Calu3 (cell line): ENCODE measurements at regions of chr14 and their contacts with region 1.

Region 1: DNA sequence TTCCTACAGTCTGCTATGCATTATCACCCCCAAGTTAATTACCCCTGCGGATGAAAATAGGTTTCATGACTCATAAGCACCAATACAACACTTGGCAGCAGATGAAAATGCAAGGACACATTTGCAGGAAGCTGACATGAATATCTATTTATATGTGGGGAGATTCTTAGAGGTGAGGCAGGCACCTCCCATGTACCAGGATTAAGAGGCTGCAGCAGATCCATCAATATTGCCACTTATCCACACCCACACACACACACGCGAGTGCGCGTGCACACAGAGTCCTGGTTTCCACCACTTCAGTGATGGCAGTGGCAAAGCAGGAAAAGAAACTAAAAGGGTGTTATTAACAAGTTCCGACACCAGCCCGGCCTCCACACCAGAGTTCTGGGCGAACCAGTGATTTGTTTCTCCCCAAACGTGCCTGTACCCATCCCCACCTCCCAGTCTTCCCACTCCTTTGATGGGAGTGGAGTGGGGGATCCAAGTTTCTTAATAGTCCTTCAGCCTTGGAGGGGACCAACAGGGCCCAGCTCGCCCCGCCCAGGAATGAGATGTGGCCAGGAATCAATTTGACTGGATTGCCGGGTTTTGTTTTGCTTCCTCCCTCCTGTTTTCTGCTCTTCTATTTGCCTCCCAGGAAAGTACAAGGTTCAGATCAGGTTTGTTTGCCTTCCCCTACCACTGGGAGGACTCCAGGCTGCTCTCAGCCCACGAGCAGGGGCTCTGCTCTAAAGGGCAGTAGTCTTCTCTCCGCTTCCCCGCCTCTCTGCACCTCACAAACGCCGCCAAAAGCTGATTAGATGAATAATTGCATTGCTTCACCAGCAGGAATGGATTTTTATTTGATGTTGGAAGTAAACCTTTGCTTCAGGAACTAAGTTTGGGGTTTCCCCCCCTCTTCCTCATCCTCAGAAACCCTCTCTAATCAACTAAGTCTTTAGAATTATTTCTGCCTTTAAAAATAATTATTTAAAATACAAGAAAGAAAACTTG is 5.2 kb downstream of the IRF2BPL start:
- DNase-seq: peak; percentile 68
- H3K4me3 Mint-ChIP-seq: peak overlapping the region; percentile 42
- H3K27ac Mint-ChIP-seq: peak overlapping the region; percentile 69
- H3K4me1 Mint-ChIP-seq: peaks cover 25% of the 10 kb centered on the region
- H3K27me3 Mint-ChIP-seq: no peaks in the 10 kb centered on the region
- CTCF ChIP-seq: no peak

Region 2: GRCh38 chr14:76759589-76759988 is 263.7 kb before region 1 on chr14:
- CTCF ChIA-PET with region 1: no interaction called
- intact Hi-C with region 1: no loop called
- DNase-seq: no peak
- H3K4me3 Mint-ChIP-seq: no peak overlapping the region
- H3K27ac Mint-ChIP-seq: no peak overlapping the region
- H3K4me1 Mint-ChIP-seq: no peaks in the 10 kb centered on the region
- H3K27me3 Mint-ChIP-seq: peaks cover 90% of the 10 kb centered on the region
- CTCF ChIP-seq: no peak

Region 3: DNA sequence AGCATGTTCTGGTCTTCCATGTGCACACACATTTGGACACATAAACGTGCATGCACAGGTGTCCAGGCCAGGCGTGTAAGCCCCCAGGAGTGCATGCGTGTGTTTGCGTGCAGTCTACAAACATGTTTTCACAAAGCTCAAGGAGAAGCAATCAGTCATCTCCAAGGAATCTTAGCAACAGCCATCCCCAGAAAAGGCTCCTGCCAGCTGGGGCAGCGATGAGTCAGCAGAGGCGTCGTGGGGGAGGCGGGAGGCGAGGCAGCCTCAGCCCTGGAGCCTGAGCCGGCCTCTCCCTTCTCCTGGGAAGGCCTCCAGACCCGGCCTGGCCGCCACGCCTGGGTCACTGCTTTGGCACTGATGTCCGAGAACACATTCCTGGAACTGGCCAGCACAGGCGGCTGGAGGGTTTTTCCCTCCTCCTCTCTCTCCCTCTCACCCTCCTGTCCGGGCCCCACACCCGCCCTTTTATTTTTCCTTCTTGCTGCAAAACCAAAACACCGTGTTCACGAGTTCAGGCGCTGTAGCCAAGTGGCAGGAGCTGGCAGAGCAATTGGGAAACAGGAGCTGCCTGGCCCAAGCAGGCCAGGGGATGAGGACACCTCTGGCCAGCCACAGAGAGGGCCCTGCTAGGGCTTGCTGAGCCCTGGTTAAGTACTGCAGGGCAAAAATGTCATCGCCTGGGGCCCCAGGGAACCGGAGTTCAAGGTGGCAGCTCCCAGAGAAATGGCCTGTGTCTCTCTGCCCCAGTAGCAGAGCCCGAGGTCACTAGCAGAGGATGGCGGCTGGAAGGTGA is 104.4 kb before region 1 on chr14:
- CTCF ChIA-PET with region 1: interaction called, 9 read pairs
- intact Hi-C with region 1: loop called (anchors 2 kb)
- DNase-seq: peak; percentile 92
- H3K4me3 Mint-ChIP-seq: peak overlapping the region; percentile 55
- H3K27ac Mint-ChIP-seq: peak overlapping the region; percentile 84
- H3K4me1 Mint-ChIP-seq: peaks cover 63% of the 10 kb centered on the region
- H3K27me3 Mint-ChIP-seq: no peaks in the 10 kb centered on the region
- CTCF ChIP-seq: no peak

Region 4: GRCh38 chr14:76953196-76954000 is 69.9 kb before region 1 on chr14:
- CTCF ChIA-PET with region 1: interaction called, 5 read pairs
- intact Hi-C with region 1: loop called (anchors 2 kb)
- DNase-seq: peak; percentile 79
- H3K4me3 Mint-ChIP-seq: peak overlapping the region; percentile 36
- H3K27ac Mint-ChIP-seq: peak overlapping the region; percentile 52
- H3K4me1 Mint-ChIP-seq: peaks cover 64% of the 10 kb centered on the region
- H3K27me3 Mint-ChIP-seq: no peaks in the 10 kb centered on the region
- CTCF ChIP-seq: no peak

Region 5: GRCh38 chr14:76962303-76962660 is 61.0 kb before region 1 on chr14:
- CTCF ChIA-PET with region 1: interaction called, 10 read pairs
- intact Hi-C with region 1: loop called (anchors 5 kb)
- DNase-seq: no peak
- H3K4me3 Mint-ChIP-seq: peak overlapping the region; percentile 75
- H3K27ac Mint-ChIP-seq: peak overlapping the region; percentile 99
- H3K4me1 Mint-ChIP-seq: peaks cover 59% of the 10 kb centered on the region
- H3K27me3 Mint-ChIP-seq: no peaks in the 10 kb centered on the region
- CTCF ChIP-seq: no peak

Region 6: DNA sequence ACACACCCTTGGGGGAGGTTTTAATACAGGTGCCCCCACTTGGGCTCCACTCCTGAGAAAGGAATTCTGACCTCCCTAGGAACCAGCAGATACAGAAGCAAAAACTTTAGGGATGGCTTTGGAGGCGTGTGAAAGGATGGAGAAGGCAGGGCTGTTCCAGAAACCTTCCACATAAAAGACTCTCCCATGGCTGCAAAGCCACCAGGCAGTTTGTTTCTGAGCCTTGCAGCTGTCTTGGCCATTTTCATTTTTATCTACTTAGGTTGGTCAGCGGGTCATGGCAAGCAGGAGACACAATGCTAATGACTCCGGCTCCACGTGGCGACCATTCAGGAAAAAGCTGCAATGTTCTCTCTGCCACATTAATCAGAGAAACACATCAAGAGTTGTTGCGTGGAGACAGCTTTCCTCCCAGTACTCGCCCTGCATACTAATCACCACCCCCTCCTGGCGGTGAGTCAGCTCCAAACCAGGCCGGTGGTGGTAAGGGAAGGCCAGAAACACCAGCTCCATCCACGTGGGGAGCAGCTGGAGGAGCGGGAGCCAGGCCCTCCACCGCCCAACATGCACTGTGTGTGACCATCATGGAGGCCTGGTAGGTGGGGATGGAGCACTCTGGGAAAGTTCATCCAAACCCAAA is 36.1 kb after region 1 on chr14:
- CTCF ChIA-PET with region 1: interaction called, 5 read pairs
- intact Hi-C with region 1: loop called (anchors 5 kb)
- DNase-seq: peak; percentile 80
- H3K4me3 Mint-ChIP-seq: no peak overlapping the region
- H3K27ac Mint-ChIP-seq: no peak overlapping the region
- H3K4me1 Mint-ChIP-seq: peaks cover 9% of the 10 kb centered on the region
- H3K27me3 Mint-ChIP-seq: no peaks in the 10 kb centered on the region
- CTCF ChIP-seq: peak; percentile 34

Region 7: GRCh38 chr14:77424862-77425261 is 401.6 kb after region 1 on chr14:
- CTCF ChIA-PET with region 1: no interaction called
- intact Hi-C with region 1: no loop called
- DNase-seq: no peak
- H3K4me3 Mint-ChIP-seq: no peak overlapping the region
- H3K27ac Mint-ChIP-seq: no peak overlapping the region
- H3K4me1 Mint-ChIP-seq: peaks cover 12% of the 10 kb centered on the region
- H3K27me3 Mint-ChIP-seq: no peaks in the 10 kb centered on the region
- CTCF ChIP-seq: no peak